WTC11 (cell line): ENCODE measurements at regions of chr5 and their contacts with region 1.

Region 1: GRCh38 chr5:55159763-55160492 is at the start of gene GPX8:
- DNase-seq: peak; percentile 21
- ATAC-seq: peak; percentile 94
- H3K4me3 Mint-ChIP-seq: peak within 1 kb of the TSS; percentile 95
- H3K27ac Mint-ChIP-seq: peak within 1 kb of the TSS; percentile 97
- H3K4me1 Mint-ChIP-seq: peaks cover 8% of the 10 kb centered on the region
- H3K27me3 Mint-ChIP-seq: peaks cover 10% of the 10 kb centered on the region
- CTCF ChIP-seq: no peak
- total RNA-seq, gene GPX8: 30.6 to 39.2 TPM (median 33.7 TPM) in 3 replicates

Region 2: DNA sequence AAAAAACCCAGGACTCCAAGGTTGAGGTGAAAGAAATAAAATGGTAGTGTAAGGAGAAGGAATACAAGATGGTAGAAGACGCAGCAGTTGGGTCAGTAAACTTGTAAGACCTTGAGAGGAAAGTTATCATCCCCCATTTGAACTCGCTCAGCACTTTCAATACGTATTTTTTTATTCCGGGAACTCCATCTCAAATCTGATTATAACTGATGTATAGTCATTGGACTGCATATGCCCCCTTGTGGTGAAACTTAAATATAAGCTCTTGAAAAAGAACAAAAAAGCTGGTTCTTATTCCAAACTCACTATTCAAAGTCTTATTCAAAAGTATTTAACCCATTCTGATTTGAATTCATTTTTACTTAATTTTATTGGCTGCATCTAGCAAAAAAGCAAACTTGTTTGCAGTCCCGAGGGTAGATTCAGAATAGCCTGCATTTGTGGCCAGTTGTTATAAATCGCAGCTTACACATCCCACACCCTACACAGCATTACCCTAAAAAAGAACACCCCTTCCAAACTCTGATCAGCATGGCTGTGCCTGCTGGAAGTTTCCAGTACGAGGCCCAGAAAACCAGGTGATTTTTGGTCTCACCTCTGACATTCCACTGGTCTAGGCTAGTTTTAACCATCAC is 292.5 kb before region 1 on chr5:
- CTCF ChIA-PET with region 1: interaction called, 19 read pairs
- POLR2A ChIA-PET with region 1: no interaction called
- DNase-seq: no peak
- ATAC-seq: no peak
- H3K4me3 Mint-ChIP-seq: no peak overlapping the region
- H3K27ac Mint-ChIP-seq: no peak overlapping the region
- H3K4me1 Mint-ChIP-seq: peaks cover 4% of the 10 kb centered on the region
- H3K27me3 Mint-ChIP-seq: no peaks in the 10 kb centered on the region
- CTCF ChIP-seq: 0 out of 2 replicates have a peak, but pooled peaks have one; percentile 33

Region 3: DNA sequence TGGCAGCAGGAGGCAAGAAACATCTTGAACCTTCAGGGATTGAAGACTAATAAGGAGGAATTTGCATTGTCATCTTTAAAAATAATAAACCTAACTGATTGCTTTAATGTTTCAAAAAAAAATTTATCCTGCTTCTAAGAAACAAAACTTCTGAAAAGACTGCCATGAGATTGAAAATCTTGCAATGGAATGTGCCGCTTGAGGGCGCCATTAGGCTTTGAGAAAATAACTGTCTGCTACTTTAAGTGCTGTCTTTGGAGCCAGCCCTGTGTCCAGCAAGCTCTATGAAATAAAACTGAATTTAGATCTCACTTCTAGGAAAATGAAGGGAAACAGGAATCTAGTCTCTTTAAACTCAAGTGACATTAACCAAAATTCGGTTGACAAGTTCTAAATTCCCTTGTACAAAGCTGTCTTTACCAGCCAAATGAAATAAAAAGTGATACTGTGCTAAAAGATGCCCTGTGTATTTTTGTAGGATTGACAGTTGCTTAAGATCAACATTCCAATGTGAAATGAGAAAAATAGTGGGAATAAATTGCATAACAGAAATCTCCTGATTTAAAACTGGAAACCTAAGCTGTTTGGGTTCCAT is 253.9 kb before region 1 on chr5:
- CTCF ChIA-PET with region 1: interaction called, 137 read pairs
- POLR2A ChIA-PET with region 1: interaction called, 3 read pairs
- DNase-seq: peak; percentile 79
- ATAC-seq: peak; percentile 53
- H3K4me3 Mint-ChIP-seq: no peak overlapping the region
- H3K27ac Mint-ChIP-seq: no peak overlapping the region
- H3K4me1 Mint-ChIP-seq: no peaks in the 10 kb centered on the region; the same call in none of the 2 replicates
- H3K27me3 Mint-ChIP-seq: no peaks in the 10 kb centered on the region
- CTCF ChIP-seq: peak; percentile 42; the same call in 1 of the 2 replicates

Region 4: DNA sequence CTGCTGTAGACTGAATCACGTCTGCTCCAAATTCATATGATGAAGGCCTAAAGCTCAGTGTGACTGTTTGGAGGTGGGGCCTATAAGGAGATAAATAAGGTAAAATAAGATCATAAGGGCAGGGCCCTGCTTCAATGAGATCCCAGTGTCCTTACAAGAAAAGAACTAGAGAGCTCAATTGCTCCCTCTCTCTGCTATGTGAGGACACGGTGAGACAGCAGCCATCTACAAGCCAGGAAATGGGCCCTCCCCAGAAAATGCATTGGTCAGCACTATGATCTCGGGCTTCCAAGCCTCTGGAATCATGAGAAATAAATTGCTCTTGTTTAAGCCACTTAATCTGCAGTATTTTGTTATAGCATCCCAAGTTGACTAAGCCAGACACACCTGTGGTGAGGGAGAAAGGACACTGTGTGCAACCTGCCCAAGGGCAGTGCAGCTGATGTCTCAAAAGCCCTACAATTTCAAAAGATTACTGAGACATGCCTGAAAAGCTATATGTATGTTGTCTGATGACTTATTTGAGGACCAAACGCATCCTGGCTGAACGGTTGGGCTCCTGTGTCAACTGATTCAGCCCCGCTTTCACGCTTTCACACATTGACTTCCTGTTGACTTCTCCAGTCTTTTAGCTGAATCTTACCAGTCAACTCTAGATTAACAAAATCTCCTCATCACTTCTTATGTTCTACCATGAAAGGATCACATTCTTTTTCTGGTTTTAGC is 122.7 kb before region 1 on chr5:
- CTCF ChIA-PET with region 1: interaction called, 12 read pairs
- POLR2A ChIA-PET with region 1: no interaction called
- DNase-seq: peak; percentile 31
- ATAC-seq: peak; percentile 100
- H3K4me3 Mint-ChIP-seq: no peak overlapping the region
- H3K27ac Mint-ChIP-seq: no peak overlapping the region
- H3K4me1 Mint-ChIP-seq: peaks cover 20% of the 10 kb centered on the region
- H3K27me3 Mint-ChIP-seq: no peaks in the 10 kb centered on the region
- CTCF ChIP-seq: no peak

Region 5: DNA sequence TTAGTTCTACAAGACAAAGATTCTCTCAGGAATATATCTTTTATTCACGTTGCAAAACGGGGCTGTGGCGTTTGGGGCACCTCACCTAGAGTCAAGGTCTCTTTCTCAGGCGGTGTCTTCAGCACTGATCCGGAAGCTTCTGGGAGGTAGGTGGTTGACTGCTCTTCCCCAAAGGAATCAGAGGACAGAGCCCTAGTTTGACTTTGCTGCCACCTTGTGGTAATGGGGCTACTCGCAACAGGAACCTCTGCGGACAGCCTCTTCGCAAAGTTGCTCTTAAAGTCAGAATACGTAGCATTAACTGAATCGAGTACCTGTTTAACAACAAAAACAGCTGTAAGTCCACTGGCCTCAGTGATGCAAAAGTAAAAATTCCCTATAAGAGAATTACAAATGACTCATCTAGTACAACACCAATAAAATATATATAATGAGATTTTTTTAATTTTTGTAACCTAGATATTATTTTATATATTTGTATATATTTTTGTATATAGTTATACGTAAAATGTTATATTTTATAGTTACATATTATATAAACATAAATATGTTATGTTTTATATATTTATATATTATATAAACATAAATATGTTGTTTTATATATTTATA is 13.3 kb before region 1 on chr5:
- CTCF ChIA-PET with region 1: interaction called, 26 read pairs
- POLR2A ChIA-PET with region 1: interaction called, 4 read pairs
- DNase-seq: peak; percentile 92
- ATAC-seq: peak; percentile 97
- H3K4me3 Mint-ChIP-seq: peak overlapping the region; percentile 40; the same call in 1 of the 2 replicates
- H3K27ac Mint-ChIP-seq: no peak overlapping the region; the same call in 1 of the 2 replicates
- H3K4me1 Mint-ChIP-seq: peaks cover 7% of the 10 kb centered on the region
- H3K27me3 Mint-ChIP-seq: no peaks in the 10 kb centered on the region; the same call in none of the 2 replicates
- CTCF ChIP-seq: peak; percentile 80

Region 6: GRCh38 chr5:55172051-55172899 is 12.3 kb after region 1 on chr5:
- CTCF ChIA-PET with region 1: interaction called, 16 read pairs
- POLR2A ChIA-PET with region 1: interaction called, 3 read pairs
- DNase-seq: peak; percentile 26
- ATAC-seq: peak; percentile 9
- H3K4me3 Mint-ChIP-seq: peak overlapping the region; percentile 74
- H3K27ac Mint-ChIP-seq: no peak overlapping the region
- H3K4me1 Mint-ChIP-seq: peaks cover 33% of the 10 kb centered on the region
- H3K27me3 Mint-ChIP-seq: peaks cover 66% of the 10 kb centered on the region
- CTCF ChIP-seq: peak; percentile 56